ENCODE measurements at regions of chr6 and their contacts with region 1.

Region 1: DNA sequence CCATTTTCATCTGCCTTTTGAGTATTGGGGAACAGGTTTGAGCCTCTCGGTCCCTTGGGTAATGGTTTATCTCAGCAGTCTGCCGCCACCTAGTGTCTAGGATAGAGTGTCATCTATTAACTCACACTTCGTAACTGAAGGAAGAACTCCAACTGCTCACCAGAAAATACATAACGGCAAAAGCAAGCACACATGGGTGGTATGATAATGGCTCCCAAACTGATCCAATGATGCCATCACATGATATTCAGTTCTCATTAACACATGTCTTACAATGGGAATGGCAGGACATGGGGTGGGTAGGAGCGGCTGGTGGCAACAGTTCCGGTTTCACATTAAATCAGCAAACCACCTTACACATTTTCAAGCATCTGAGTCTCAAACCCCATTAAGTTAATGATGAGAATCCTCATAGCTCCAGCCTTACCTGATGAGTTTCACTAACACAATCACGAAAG is 110.7 kb upstream of the PHACTR1 start:
- DNase-seq: peak in 5 of 9 donors; percentile 11 to 50 (median 27)
- ATAC-seq: peak; percentile 75
- H3K4me3 ChIP-seq: no peak overlapping the region
- H3K4me3 Mint-ChIP-seq: peak overlapping the region in 1 of 10 donors; percentile 49
- H3K27ac ChIP-seq: no peak overlapping the region
- H3K27ac Mint-ChIP-seq: no peak overlapping the region
- H3K4me1 ChIP-seq: no peaks in the 10 kb centered on the region
- H3K4me1 Mint-ChIP-seq: peaks cover 0 to 12% (median 0%) of the 10 kb centered on the region in 7 donors
- H3K27me3 ChIP-seq: no peaks in the 10 kb centered on the region
- H3K27me3 Mint-ChIP-seq: peaks cover 2 to 39% (median 32%) of the 10 kb centered on the region in 5 donors

Region 2: DNA sequence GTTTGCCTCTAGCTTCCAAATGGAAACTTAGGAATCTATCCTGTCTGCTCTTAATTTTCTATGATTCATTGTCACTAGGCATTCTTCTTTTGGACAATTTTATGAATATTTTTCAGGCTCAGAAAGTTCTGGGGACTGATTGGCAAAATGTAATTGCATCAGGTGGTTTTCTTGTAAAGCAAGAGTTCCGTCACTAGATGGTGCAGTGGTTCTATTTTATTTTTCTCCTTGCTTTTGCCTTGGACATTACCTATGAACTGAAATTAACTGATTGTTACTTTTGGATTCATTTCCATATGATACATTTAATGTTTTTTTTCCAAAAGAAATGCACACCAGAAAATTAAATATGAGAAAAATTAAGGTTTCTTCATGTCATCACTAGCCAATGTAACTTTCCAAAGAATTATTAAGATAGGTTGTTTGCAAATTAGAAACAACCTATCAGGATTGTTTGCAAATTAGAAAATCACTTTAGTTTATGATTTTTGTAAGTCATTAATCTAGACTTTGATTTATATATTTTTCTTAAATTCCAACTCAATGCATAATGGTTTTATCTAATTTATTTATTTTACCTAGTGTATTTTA is 1020.4 kb before region 1 on chr6:
- CTCF ChIA-PET with region 1: interaction called, 3 read pairs
- POLR2A ChIA-PET with region 1: no interaction called
- intact Hi-C with region 1: loop called in 1 of 2 experiments (anchors 1 kb)
- DNase-seq: peak in 4 of 9 donors; percentile 9 to 23 (median 10)
- ATAC-seq: no peak
- H3K4me3 ChIP-seq: no peak overlapping the region
- H3K4me3 Mint-ChIP-seq: no peak overlapping the region
- H3K27ac ChIP-seq: no peak overlapping the region
- H3K27ac Mint-ChIP-seq: no peak overlapping the region
- H3K4me1 ChIP-seq: no peaks in the 10 kb centered on the region
- H3K4me1 Mint-ChIP-seq: no peaks in the 10 kb centered on the region
- H3K27me3 ChIP-seq: no peaks in the 10 kb centered on the region
- H3K27me3 Mint-ChIP-seq: peaks cover 0 to 19% (median 0%) of the 10 kb centered on the region in 5 donors

Measured in naive thymus-derived CD4-positive, alpha-beta T cell (primary cell).